ENCODE measurements at regions of chr1 and their contacts with region 1.

Region 1: GRCh38 chr1:150955280-150955679 is 19.4 kb downstream of the CERS2 start:
- DNase-seq: no peak
- ATAC-seq: no peak
- H3K4me3 Mint-ChIP-seq: no peak overlapping the region
- H3K27ac Mint-ChIP-seq: no peak overlapping the region
- H3K4me1 Mint-ChIP-seq: peaks cover 6% of the 10 kb centered on the region
- H3K27me3 Mint-ChIP-seq: no peaks in the 10 kb centered on the region

Region 2: DNA sequence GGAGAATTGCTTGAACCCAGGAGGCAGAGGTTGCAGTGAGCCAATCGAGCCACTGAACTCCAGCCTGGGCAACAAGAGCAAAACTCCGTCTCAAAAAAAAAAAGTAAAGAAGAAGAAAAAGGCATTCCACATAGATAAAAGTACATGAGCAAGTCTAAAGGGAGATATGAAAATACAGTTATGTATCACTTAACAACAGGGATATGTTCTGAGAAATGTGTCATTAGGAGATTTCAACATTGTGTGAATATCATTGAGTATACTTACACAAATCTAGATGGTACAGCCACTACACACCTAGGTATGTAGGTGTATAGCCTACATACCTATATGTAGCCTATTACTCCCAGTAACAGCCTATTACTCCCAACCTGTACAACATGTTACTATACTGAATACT is 91.6 kb before region 1 on chr1:
- CTCF ChIA-PET with region 1: no interaction called
- POLR2A ChIA-PET with region 1: no interaction called
- intact Hi-C with region 1: no loop called
- DNase-seq: no peak
- ATAC-seq: peak; percentile 61
- H3K4me3 Mint-ChIP-seq: no peak overlapping the region
- H3K27ac Mint-ChIP-seq: no peak overlapping the region
- H3K4me1 Mint-ChIP-seq: peaks cover 24% of the 10 kb centered on the region
- H3K27me3 Mint-ChIP-seq: no peaks in the 10 kb centered on the region

Region 3: GRCh38 chr1:150887018-150887417 is 68.3 kb before region 1 on chr1 and contains the start of gene CTXND2:
- CTCF ChIA-PET with region 1: no interaction called
- POLR2A ChIA-PET with region 1: interaction called, 16 read pairs
- intact Hi-C with region 1: no loop called
- DNase-seq: no peak
- ATAC-seq: no peak
- H3K4me3 Mint-ChIP-seq: no peak within 1 kb of the TSS
- H3K27ac Mint-ChIP-seq: no peak within 1 kb of the TSS
- H3K4me1 Mint-ChIP-seq: peaks cover 34% of the 10 kb centered on the region
- H3K27me3 Mint-ChIP-seq: no peaks in the 10 kb centered on the region
- total RNA-seq, gene CTXND2: not detected

Region 4: DNA sequence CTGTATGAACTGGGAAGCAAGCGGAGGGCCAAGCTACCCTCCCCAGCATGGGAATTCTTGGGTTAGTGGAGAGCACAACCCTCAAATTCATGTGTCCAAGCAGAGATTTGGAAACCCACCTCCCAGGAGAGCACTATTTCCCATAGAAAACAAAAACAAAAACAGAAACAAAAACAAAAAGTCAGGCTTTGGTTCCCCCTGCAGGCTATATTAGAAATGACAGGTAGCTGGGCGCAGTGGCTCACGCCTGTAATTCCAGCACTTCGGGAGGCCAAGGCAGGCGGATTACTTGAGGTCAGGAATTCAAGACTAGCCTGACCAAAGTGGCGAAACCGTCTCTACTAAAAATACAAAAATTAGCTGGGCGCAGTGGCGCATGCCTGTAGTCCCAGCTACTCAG is 40.6 kb after region 1 on chr1:
- CTCF ChIA-PET with region 1: interaction called, 13 read pairs
- POLR2A ChIA-PET with region 1: no interaction called
- intact Hi-C with region 1: no loop called
- DNase-seq: peak; percentile 47
- ATAC-seq: peak; percentile 34
- H3K4me3 Mint-ChIP-seq: no peak overlapping the region
- H3K27ac Mint-ChIP-seq: no peak overlapping the region
- H3K4me1 Mint-ChIP-seq: peaks cover 18% of the 10 kb centered on the region
- H3K27me3 Mint-ChIP-seq: no peaks in the 10 kb centered on the region